Activated CD4-positive, alpha-beta T cell treated with anti-CD3 and anti-CD28 coated beads for 36 hours (primary cell): ENCODE measurements at regions of chr12 and their contacts with region 1.

Region 1: DNA sequence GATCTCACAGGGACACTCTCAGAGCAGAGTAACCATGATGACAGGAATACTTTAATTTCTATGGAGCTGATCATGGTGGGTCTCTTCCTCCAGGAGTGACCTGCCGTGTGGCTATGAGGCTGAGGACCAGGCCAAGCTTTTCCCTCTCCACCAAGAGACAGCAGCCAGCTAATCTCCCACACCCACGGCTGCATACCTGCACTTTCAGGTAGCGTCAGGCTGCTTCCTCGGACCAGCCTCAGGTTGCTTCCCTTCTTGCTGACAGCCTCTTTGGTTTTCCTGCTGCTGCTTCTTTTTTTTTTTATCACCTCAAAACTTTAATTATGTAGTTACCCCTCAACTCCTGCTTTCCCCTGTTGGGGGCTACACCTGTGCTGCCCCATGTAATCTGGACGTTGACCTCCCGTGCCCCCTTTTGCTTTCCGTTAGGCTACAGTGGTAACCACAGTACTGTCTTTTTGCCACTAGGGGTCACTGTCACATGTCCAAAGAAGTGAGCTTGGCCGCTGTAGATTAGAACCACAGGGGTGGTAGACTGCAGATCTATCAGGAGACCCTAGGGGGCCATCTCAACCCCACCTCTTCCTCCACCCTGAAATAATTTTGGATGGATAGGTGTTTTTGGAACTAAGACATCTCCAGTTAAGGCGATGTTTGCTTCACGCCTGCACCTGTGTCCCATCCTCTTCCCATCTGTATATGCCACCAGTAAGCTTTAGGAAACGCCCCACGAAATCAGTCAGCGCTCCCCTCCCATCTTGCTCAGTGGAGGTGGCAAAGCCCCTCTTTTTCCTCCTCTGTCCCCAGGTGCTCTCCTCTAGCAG is 7.8 kb upstream of the PIP4K2C start:
- DNase-seq: peak; percentile 80
- ATAC-seq: peak; percentile 100
- H3K4me3 Mint-ChIP-seq: no peak overlapping the region
- H3K27ac Mint-ChIP-seq: no peak overlapping the region
- H3K4me1 Mint-ChIP-seq: no peaks in the 10 kb centered on the region
- H3K27me3 Mint-ChIP-seq: peaks cover 5% of the 10 kb centered on the region

Region 2: DNA sequence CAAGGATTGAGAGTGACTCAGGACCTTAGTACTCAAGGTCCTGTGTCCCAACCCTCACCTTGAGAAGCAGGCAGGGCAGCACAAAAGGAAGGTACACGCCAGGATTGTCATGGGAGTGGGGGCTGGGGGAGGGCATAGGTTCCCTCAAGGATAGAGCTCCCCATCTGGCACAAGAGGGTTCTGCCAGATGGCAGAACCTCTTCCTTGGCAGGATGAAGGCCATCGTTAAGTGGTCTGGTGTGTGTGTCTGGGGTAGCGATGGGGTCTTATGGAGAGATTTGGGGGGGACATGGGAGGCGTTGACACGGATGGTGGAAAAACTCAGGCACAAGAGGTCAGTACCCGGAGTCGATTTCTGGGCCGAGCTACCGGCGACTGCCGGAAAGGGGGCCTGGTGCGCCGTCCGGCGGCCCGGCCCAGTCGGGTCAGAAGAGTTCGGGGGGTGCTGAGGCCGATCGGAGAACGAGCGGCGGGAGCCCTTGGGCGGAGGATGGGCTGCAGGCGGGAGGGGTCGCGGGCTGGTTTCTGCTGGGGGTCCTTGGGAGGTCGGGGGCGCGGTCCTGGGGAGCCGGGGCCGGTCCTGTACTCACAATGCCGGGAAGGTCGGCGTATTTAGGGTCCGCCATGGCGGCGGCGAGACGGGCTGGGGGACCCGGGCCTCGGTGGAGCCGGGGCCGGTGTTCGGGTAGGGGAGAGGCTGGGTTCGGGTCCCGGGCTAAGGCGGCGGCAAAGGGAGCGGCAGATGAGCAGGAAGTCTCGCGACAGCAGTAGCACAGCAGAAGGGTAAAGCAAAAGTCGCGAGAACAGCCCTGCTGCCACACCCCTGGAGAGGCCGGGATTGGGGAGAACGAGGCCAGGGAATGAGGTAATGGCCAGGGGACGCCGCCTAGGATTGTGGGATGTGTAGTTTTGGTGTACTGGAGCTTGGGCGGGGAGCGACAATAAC is 36.5 kb before region 1 on chr12 and contains the start of gene DCTN2:
- CTCF ChIA-PET with region 1: interaction called, 11 read pairs
- POLR2A ChIA-PET with region 1: no interaction called
- intact Hi-C with region 1: no loop called
- DNase-seq: peak; percentile 97
- ATAC-seq: peak; percentile 98
- H3K4me3 Mint-ChIP-seq: peak within 1 kb of the TSS; percentile 99
- H3K27ac Mint-ChIP-seq: peak within 1 kb of the TSS; percentile 99
- H3K4me1 Mint-ChIP-seq: peaks cover 45% of the 10 kb centered on the region
- H3K27me3 Mint-ChIP-seq: peaks cover 13% of the 10 kb centered on the region
- total RNA-seq, gene DCTN2: 69.7 to 81.2 TPM

Region 3: DNA sequence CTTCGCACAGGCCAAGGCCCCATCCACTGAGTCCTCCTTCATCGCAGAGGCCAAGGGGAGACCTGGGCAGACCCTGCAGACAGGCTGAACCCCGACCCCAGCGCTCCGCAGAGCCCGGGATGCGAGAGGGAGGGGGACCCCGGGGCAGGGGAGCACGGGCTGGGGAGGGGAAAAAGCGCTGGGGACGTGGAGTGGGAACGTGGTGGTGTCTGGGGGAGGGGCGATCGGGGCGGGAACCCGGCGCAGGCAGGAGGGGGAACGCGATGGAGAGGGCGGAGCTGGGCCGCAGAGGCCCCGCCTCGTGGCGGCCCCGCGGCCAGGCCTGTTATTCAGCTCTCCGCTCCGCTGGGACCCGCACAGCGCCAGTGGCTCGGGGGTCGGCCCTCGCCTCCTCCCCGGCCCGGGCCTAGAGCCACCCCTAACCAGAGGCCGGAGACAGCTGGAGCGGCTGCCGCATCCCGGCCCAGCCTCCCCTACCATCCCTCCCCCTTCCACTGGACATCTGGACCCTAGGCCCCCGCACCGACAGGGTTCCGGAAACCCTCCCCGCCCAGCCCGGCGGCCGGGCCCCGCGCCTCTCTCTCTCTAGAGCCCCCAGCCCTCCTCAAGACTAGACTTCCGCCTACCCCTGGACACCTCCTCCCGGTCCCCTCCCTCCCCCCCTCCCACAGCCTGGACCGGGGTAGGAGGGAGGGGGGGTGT is 28.0 kb after region 1 on chr12 and contains the start of gene ARHGEF25:
- CTCF ChIA-PET with region 1: interaction called, 16 read pairs
- POLR2A ChIA-PET with region 1: no interaction called
- intact Hi-C with region 1: no loop called
- DNase-seq: peak; percentile 74
- ATAC-seq: peak; percentile 77
- H3K4me3 Mint-ChIP-seq: peak within 1 kb of the TSS; percentile 55
- H3K27ac Mint-ChIP-seq: no peak within 1 kb of the TSS
- H3K4me1 Mint-ChIP-seq: peaks cover 3% of the 10 kb centered on the region
- H3K27me3 Mint-ChIP-seq: peaks cover 13% of the 10 kb centered on the region
- total RNA-seq, gene ARHGEF25: 2.2 to 2.6 TPM

Region 4: GRCh38 chr12:57627501-57628279 is 44.5 kb after region 1 on chr12:
- CTCF ChIA-PET with region 1: interaction called, 76 read pairs
- POLR2A ChIA-PET with region 1: no interaction called
- intact Hi-C with region 1: no loop called
- DNase-seq: peak; percentile 67
- ATAC-seq: peak; percentile 79
- H3K4me3 Mint-ChIP-seq: no peak overlapping the region
- H3K27ac Mint-ChIP-seq: no peak overlapping the region
- H3K4me1 Mint-ChIP-seq: peaks cover 14% of the 10 kb centered on the region
- H3K27me3 Mint-ChIP-seq: peaks cover 81% of the 10 kb centered on the region

Region 5: DNA sequence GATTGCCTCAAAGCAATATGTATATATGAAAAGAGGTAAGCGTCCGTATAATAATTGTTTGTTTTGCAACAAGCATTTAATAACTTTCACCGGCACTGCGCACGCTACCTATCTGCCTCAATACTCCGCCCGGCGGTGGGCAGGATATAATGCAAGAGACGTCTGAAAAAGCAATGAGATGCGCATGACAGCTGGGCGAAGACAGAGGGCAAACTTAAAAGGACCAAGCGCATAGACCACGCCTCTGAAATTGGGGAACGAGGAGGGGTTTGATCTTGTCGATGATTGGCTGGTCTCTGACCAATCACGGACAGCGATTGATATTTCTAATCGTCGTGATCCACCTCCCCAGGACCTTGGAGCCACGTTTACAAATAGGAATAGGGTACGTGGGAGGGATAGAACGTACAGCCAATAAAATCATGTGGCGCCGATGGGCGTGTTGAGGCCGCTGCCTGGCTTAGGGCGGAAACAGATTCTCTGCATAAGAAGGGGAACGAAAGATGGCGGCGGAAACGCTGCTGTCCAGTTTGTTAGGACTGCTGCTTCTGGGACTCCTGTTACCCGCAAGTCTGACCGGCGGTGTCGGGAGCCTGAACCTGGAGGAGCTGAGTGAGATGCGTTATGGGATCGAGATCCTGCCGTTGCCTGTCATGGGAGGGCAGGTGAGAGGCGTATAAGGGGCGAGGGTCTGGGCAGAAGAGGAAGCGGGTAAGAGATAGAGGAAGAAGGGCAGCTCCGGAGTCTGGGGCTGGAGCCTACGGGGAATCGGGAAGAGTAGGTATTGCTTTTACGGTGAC is 110.6 kb after region 1 on chr12 and contains the start of gene OS9:
- CTCF ChIA-PET with region 1: interaction called, 17 read pairs
- POLR2A ChIA-PET with region 1: interaction called, 6 read pairs
- intact Hi-C with region 1: loop called (anchors 1 to 2 kb)
- DNase-seq: peak; percentile 96
- ATAC-seq: peak; percentile 98
- H3K4me3 Mint-ChIP-seq: no peak within 1 kb of the TSS
- H3K27ac Mint-ChIP-seq: no peak within 1 kb of the TSS
- H3K4me1 Mint-ChIP-seq: peaks cover 4% of the 10 kb centered on the region
- H3K27me3 Mint-ChIP-seq: peaks cover 8% of the 10 kb centered on the region
- total RNA-seq, gene OS9: 61.7 to 63.2 TPM

Region 6: DNA sequence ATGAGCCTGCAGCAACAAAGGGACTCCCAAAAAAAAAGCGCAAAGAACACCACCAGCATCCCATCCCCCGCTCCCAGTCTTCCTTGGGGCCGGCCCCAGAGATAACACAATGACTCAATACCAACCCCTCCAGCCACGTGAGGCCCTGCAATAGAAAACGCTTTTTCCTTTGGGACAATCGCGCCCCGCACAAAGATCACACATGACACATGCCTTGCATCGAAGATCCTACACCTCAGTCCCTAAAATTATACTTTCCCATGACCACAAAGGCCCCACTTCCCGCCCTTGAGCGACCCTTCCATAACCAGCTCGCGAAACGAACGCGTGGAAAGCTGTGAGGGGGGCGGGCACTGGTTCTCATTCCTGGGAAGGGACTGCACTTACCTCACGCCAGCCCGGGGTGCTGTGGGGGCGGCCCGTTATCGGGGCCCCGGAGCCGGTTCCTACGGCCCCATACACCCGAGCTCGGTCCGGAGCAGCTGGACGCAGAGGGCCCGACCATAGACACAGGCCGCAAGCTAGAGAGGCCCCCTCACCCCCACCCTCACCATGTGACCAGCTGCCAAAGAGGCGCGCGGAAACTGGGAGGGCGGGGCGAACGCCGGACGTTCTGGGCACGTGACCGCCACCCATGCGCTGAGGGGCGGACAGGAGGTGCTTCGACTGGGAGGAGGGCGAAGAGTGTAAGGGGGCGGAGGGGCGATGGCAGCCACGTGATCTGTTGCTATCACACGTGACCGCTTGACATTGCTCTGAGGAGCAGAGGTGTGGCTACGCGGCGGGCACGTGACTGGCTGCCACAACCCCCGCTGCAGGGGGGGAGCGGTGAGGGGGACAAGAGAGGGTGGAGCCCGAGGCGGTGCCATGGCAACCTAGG is 168.8 kb after region 1 on chr12 and contains the start of gene CDK4:
- CTCF ChIA-PET with region 1: no interaction called
- POLR2A ChIA-PET with region 1: no interaction called
- intact Hi-C with region 1: no loop called
- DNase-seq: peak; percentile 99
- ATAC-seq: peak; percentile 77
- H3K4me3 Mint-ChIP-seq: peak within 1 kb of the TSS; percentile 100
- H3K27ac Mint-ChIP-seq: peak within 1 kb of the TSS; percentile 99
- H3K4me1 Mint-ChIP-seq: peaks cover 56% of the 10 kb centered on the region
- H3K27me3 Mint-ChIP-seq: no peaks in the 10 kb centered on the region
- total RNA-seq, gene CDK4: 132 to 208 TPM

Region 7: GRCh38 chr12:57793920-57794319 is 210.7 kb after region 1 on chr12:
- CTCF ChIA-PET with region 1: no interaction called
- POLR2A ChIA-PET with region 1: no interaction called
- intact Hi-C with region 1: no loop called
- DNase-seq: no peak
- ATAC-seq: peak; percentile 33
- H3K4me3 Mint-ChIP-seq: no peak overlapping the region
- H3K27ac Mint-ChIP-seq: peak overlapping the region; percentile 69
- H3K4me1 Mint-ChIP-seq: peaks cover 13% of the 10 kb centered on the region
- H3K27me3 Mint-ChIP-seq: no peaks in the 10 kb centered on the region

Region 8: DNA sequence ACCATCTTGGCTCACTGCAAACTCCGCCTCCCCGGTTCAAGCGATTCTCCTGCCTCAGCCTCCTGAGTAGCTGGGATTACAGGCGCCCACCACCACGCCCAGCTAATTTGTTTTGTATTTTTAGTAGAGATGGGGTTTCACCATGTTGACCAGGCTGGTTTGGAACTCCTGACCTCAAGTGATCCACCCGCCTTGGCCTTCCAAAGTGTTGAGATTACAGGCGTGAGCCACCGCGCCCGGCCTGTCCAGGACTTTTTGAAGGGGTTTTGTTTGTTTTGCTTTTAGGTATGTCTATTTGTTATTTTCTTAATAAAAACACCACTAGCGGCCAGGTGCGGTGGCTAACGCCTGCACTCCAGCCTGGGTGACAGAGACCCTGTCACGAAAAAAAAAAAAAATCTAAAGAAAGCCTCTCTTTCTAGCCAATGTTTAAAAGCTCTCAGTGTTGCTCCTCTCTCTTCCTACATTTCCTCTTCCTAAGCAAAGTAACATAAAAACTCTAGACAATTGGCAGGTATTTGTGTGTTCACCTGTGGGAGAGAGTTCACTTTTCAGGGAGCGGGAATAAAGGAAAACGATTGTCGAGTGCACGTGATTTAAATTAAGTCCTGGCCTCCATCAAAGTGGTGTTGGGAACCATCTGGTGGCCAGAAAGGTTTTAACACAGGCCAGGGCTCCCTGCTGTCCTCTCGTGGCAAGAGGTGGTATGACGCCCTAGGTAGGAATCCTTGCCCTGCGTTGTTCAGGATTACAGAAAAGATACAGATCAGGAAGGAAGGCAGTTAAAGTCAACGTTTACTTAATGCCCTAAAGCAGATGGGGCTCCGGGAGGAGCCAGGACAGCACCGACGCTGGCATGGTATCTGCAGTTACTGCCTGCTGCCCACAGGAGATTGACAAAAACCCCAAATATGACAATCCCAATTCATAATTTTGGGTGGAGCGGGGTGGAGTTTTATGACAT is 321.9 kb after region 1 on chr12:
- CTCF ChIA-PET with region 1: no interaction called
- POLR2A ChIA-PET with region 1: no interaction called
- intact Hi-C with region 1: loop called in 1 of 2 experiments (anchors 1 kb)
- DNase-seq: peak; percentile 91
- ATAC-seq: peak; percentile 98
- H3K4me3 Mint-ChIP-seq: peak overlapping the region; percentile 37
- H3K27ac Mint-ChIP-seq: no peak overlapping the region
- H3K4me1 Mint-ChIP-seq: peaks cover 3% of the 10 kb centered on the region
- H3K27me3 Mint-ChIP-seq: peaks cover 7% of the 10 kb centered on the region